PC-3 (cell line): ENCODE measurements at regions of chr11 and their contacts with region 1.

Region 1: DNA sequence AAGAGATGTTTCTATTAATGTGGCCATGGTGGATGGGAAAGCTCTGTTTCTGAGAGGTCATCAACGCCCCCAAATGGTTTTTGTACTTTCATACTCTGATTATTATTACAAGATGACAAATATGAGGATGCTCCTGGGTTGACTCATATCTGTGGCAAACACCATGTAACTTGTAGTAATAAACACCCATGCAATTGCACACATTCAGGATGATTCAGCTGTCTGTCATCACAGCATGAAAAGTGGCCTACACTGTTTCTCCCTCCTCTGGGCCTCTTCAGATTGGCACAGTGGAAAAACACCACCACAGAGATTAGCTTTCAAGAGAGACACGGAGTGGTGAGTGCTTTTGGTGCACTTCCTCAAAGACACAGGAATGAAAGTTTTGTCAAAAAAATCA is 85.4 kb downstream of the MTNR1B start:
- DNase-seq: peak; percentile 94
- ATAC-seq: peak; percentile 99
- H3K4me3 ChIP-seq: no peak overlapping the region
- H3K27ac ChIP-seq: peak overlapping the region; percentile 36
- H3K4me1 ChIP-seq: peaks cover 10% of the 10 kb centered on the region
- H3K27me3 ChIP-seq: peaks cover 34% of the 10 kb centered on the region
- CTCF ChIP-seq: no peak

Region 2: DNA sequence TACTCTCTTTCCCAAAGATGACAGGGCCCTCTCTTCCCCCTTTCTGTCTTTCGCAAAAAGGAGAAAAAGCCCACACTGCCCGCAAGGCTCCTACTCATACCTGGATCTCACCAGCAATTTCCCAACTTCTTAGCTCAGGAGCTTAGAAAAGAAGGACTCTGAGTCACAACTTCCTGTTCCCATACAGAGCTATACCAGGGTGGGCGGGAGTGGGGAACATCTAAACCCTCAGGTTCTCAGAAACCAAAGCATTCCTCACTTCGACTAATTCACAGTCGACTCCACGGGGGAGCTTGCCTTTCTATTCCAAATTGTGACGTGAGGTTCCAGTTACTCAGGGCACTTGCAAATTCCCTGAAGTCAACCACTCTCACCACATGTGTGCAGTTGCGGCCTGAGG is 23.5 kb before region 1 on chr11:
- CTCF ChIA-PET with region 1: no interaction called
- POLR2A ChIA-PET with region 1: no interaction called
- intact Hi-C with region 1: no loop called
- DNase-seq: no peak
- ATAC-seq: no peak
- H3K4me3 ChIP-seq: no peak overlapping the region
- H3K27ac ChIP-seq: no peak overlapping the region
- H3K4me1 ChIP-seq: no peaks in the 10 kb centered on the region
- H3K27me3 ChIP-seq: peaks cover 23% of the 10 kb centered on the region; the same call in 1 of the 2 replicates
- CTCF ChIP-seq: no peak

Region 3: DNA sequence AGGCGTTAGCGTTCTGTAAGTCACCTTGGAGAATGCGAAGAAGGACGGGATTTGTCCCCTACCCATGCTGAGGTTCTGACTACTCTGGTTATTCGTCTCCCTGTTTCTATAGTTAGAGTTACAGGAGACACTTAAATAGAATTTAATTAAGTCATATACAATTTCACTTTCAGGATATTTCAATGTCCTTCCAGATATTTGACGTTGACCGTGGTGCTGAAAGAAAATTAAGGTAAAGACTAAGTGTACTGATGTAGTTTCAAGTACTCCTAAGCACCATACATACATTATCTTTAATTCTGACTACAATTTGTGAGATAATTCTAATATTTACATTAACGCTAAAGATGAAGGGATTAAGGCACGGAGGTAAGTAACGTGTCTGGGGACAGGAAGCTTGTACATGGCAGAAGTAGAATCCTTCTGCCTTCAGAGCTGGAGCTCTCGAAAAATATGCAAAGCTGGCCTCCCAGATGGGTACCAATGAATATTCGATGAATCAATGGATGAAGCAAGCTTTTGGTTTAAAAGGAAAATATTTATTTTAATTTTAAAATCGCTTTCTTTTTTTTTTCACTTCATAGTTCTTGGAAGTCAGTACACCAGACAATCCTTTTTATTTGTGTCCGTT is 143.4 kb after region 1 on chr11:
- CTCF ChIA-PET with region 1: no interaction called
- POLR2A ChIA-PET with region 1: interaction called, 10 read pairs
- intact Hi-C with region 1: no loop called
- DNase-seq: peak; percentile 55
- ATAC-seq: peak; percentile 3; the same call in 1 of the 2 replicates
- H3K4me3 ChIP-seq: peak overlapping the region; percentile 75
- H3K27ac ChIP-seq: no peak overlapping the region
- H3K4me1 ChIP-seq: 0 out of 2 replicates have a peak, but pooled peaks cover 3% of the 10 kb centered on the region
- H3K27me3 ChIP-seq: no peaks in the 10 kb centered on the region
- CTCF ChIP-seq: no peak